PC-9 (cell line): ENCODE measurements at regions of chr11 and their contacts with region 1.

Region 1: DNA sequence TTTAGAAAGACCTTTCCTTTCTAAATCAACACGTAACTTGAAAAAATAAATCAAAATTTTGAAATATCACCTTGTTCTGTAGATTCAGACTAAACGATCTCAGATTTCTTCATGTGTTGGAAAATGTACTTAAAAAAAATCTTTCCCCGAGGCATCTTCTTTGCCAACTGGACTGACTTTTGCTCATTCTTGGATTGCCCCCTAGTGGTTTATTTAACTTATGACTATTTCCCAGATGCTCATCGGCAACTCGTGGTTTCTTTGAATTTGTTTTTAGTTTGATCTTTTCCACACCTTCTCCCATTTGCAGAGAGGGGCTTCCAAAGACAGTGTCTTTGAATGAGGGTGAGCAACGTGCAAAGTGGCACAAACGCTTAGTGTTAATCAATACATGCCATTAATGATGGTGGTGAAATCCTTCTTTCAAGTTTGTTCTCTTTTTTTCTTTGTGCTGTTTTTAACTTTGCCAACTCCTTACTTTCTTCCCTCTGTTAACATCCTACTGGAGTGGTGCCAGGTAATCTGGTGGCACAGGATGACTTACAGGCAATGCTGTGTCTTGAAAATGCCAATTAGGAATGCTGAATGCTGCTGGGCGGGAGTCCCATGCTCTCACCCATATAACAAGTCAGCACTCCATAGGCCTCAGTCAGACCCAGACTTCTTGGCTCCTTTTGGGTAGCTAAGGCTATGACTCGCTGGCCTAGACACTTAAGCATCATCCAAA is 18.3 kb downstream of the PRSS23 start:
- DNase-seq: peak in 1 of 2 experiments; percentile 77
- H3K4me3 ChIP-seq: no peak overlapping the region
- H3K27ac ChIP-seq: no peak overlapping the region
- H3K4me1 ChIP-seq: peaks cover 20% of the 10 kb centered on the region
- H3K27me3 ChIP-seq: no peaks in the 10 kb centered on the region
- CTCF ChIP-seq: peak; percentile 94

Region 2: GRCh38 chr11:86241956-86242535 is 576.6 kb before region 1 on chr11:
- CTCF ChIA-PET with region 1: no interaction called
- POLR2A ChIA-PET with region 1: no interaction called
- intact Hi-C with region 1: no loop called
- DNase-seq: no peak
- H3K4me3 ChIP-seq: no peak overlapping the region
- H3K27ac ChIP-seq: no peak overlapping the region
- H3K4me1 ChIP-seq: peaks cover 18% of the 10 kb centered on the region
- H3K27me3 ChIP-seq: no peaks in the 10 kb centered on the region
- CTCF ChIP-seq: no peak

Region 3: DNA sequence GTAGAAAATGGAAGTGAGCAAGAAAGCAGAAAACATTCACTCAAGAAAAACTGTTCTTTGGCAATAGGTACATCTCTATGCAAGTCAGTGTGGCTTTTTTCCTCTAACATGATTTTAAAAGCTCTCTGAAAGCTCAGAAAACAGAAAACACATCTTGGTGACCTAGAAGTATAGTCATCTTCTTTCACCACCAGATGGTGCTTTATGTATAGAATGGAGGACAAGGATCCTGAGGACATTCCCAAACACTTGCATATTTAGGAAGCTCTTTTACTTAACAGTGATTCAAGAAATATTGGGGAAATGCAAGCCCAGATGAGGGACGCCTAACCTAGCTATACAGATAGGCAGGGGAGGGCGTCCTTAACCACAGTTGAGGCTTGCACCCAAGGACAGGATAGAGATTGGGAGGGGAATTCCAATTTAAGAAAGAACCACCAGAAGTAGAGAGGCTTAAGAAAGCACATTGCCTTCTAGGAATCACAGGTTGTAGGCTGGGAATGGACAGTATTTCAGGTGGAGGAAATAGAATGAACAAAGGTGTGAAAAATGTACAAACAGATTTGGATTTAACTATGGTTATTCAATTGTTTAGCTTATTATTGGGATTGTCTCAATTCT is 457.7 kb before region 1 on chr11:
- CTCF ChIA-PET with region 1: no interaction called
- POLR2A ChIA-PET with region 1: no interaction called
- intact Hi-C with region 1: loop called (anchors 1 kb)
- DNase-seq: peak in 1 of 2 experiments; percentile 65
- H3K4me3 ChIP-seq: no peak overlapping the region
- H3K27ac ChIP-seq: no peak overlapping the region
- H3K4me1 ChIP-seq: no peaks in the 10 kb centered on the region
- H3K27me3 ChIP-seq: no peaks in the 10 kb centered on the region
- CTCF ChIP-seq: peak; percentile 77

Region 4: DNA sequence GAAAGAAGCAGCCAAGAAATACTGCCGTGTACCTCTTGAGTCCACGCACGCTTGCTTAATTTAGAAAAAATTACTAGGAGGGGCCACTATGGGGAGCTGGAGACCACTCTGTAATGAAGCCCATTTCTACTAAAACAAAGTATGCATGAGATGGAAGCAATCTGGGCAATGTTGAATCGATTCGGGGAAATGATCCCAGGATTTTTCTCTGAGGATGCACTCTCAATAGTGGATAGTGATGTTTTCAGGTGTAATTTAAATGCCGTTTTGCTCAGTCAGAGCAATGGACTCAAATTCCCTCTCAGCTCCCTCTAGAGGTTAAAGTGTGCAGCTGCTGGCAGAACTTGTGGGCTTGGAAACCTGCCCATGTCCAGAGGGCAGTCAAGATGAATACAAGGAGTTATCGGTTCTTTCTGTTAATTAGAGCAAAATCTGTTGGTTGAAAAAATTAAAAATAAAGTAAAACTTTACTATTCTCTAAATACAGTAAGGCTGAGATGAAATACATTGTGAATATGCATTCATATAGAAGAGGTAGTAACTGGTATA is 210.3 kb before region 1 on chr11:
- CTCF ChIA-PET with region 1: no interaction called
- POLR2A ChIA-PET with region 1: no interaction called
- intact Hi-C with region 1: loop called (anchors 1 kb)
- DNase-seq: peak; percentile 72 to 73
- H3K4me3 ChIP-seq: no peak overlapping the region
- H3K27ac ChIP-seq: no peak overlapping the region
- H3K4me1 ChIP-seq: peaks cover 22% of the 10 kb centered on the region
- H3K27me3 ChIP-seq: no peaks in the 10 kb centered on the region
- CTCF ChIP-seq: peak; percentile 96

Region 5: DNA sequence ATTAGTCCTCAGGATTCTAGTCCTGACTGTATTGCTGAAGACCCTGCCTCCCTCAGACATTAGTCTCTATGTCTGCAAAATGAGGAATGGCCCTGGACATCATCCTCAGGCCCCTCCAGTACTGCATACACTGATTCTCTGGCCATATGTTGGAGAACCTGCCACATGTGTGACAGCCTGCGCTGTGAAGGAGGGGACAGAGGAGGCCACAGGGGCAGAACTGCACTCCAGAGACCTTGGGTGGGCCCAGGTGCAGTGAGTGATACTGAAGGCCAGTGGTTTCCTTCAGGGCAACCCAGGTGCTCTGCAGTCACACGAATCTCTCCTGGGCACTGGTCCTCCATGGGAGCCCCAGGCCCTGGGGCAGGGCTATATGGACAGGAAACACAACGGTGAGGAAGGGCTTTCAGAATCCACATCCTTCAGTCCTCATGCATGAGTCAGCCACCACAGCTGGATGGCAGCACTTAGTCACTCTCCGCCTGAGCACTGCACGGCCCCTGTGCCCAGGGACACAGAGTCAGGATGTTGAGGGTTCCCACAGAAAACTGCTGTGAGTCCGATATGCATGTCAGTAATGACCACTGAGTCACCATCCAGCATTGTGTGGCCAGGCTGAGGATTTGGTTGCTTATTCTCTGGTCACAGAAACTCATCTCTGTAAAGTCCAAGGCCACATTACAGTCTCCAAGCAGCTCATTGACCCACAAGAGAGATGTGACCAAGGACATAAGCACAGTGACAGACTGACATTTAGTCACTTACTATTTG is 185.9 kb before region 1 on chr11:
- CTCF ChIA-PET with region 1: no interaction called
- POLR2A ChIA-PET with region 1: no interaction called
- intact Hi-C with region 1: loop called (anchors 1 kb)
- DNase-seq: peak; percentile 83 to 96
- H3K4me3 ChIP-seq: no peak overlapping the region
- H3K27ac ChIP-seq: peak overlapping the region; percentile 74
- H3K4me1 ChIP-seq: peaks cover 19% of the 10 kb centered on the region
- H3K27me3 ChIP-seq: no peaks in the 10 kb centered on the region
- CTCF ChIP-seq: peak; percentile 52

Region 6: DNA sequence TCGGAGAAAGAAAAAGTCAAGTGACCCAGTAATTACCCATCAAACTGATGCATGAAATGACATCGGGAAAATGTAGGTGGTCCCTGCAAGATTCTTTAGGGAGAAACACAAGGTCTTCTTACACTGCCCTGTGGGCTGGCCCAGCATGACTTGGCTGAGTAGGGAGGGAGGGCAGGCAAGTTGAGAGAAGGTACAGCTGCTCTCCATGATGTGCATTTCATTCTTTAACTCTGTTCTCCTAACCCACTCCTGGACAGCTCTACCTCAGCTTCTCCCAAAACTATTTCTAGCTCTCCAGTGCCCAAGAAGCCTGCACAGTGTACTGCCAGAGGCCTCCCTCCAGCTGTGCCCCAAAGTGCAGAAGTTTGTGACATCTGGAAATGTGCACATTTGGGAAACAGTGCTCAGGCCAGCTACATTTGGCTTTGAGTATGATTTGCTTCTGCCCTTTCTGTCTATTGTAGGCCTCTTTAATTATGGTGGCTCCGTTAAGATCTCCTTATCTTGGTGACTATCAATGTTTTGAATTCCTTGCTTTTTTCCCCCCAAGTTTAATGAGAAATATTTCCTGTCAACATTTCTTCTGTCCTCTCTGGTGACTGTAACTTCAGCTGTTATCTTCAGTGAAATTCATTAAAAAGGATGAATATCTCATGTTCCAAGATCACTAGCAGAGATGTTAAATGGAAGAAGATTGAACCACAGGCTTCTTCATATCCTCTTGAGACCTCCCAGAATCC is 44.9 kb before region 1 on chr11:
- CTCF ChIA-PET with region 1: no interaction called
- POLR2A ChIA-PET with region 1: no interaction called
- intact Hi-C with region 1: no loop called
- DNase-seq: no peak
- H3K4me3 ChIP-seq: no peak overlapping the region
- H3K27ac ChIP-seq: no peak overlapping the region
- H3K4me1 ChIP-seq: peaks cover 15% of the 10 kb centered on the region
- H3K27me3 ChIP-seq: no peaks in the 10 kb centered on the region
- CTCF ChIP-seq: no peak

Region 7: GRCh38 chr11:86790073-86790727 is 28.4 kb before region 1 on chr11:
- CTCF ChIA-PET with region 1: no interaction called
- POLR2A ChIA-PET with region 1: no interaction called
- intact Hi-C with region 1: no loop called
- DNase-seq: peak in 1 of 2 experiments; percentile 68
- H3K4me3 ChIP-seq: no peak overlapping the region
- H3K27ac ChIP-seq: peak overlapping the region; percentile 31; the same call in 1 of the 2 replicates
- H3K4me1 ChIP-seq: peaks cover 28% of the 10 kb centered on the region
- H3K27me3 ChIP-seq: no peaks in the 10 kb centered on the region
- CTCF ChIP-seq: no peak

Region 8: DNA sequence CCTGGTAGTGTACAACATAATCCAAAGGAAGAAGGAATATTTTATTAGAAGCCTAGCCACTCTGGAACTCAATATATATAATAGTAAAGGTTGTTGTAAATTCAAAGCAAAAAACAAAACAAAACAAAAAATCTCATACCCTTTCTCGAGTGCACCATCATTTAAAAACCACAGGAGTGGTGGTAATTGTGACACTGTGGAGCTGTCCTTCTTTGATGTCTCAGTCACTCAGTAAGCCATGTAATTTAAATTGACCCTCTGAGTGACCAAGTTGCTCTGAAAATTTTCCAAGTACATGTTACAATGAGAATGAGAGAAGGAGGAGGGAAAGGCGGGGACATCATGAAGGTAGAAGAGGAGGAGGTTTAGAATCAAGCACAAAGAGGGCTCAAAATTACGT is 11.7 kb before region 1 on chr11:
- CTCF ChIA-PET with region 1: no interaction called
- POLR2A ChIA-PET with region 1: no interaction called
- intact Hi-C with region 1: no loop called
- DNase-seq: no peak
- H3K4me3 ChIP-seq: no peak overlapping the region
- H3K27ac ChIP-seq: no peak overlapping the region
- H3K4me1 ChIP-seq: peaks cover 39% of the 10 kb centered on the region
- H3K27me3 ChIP-seq: no peaks in the 10 kb centered on the region
- CTCF ChIP-seq: no peak

Region 9: DNA sequence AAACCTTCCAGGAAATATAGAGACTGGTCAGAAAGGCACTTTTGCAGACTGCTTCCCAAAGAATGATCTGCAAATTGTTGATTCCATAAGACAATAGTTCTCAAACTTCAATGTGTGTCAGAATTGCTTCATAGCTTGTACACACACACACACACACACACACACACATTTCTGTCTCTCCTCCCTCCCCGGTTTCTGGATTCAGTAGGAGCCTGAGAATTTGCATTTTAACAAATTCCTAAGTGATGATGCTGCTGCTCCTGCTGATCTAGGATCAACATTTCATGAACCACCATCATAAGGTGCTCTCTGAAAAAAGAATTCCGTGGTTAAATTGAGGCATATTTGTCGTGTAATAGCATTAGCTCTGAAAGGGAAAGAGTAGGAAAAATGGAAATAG is 171.9 kb after region 1 on chr11:
- CTCF ChIA-PET with region 1: interaction called, 11 read pairs
- POLR2A ChIA-PET with region 1: no interaction called
- intact Hi-C with region 1: no loop called
- DNase-seq: peak in 1 of 2 experiments; percentile 46
- H3K4me3 ChIP-seq: no peak overlapping the region
- H3K27ac ChIP-seq: no peak overlapping the region
- H3K4me1 ChIP-seq: peaks cover 16% of the 10 kb centered on the region
- H3K27me3 ChIP-seq: no peaks in the 10 kb centered on the region
- CTCF ChIP-seq: no peak